Dorsolateral prefrontal cortex (tissue), 120 donors: ENCODE measurements at regions of chr12 and their contacts with region 1.

Region 1: DNA sequence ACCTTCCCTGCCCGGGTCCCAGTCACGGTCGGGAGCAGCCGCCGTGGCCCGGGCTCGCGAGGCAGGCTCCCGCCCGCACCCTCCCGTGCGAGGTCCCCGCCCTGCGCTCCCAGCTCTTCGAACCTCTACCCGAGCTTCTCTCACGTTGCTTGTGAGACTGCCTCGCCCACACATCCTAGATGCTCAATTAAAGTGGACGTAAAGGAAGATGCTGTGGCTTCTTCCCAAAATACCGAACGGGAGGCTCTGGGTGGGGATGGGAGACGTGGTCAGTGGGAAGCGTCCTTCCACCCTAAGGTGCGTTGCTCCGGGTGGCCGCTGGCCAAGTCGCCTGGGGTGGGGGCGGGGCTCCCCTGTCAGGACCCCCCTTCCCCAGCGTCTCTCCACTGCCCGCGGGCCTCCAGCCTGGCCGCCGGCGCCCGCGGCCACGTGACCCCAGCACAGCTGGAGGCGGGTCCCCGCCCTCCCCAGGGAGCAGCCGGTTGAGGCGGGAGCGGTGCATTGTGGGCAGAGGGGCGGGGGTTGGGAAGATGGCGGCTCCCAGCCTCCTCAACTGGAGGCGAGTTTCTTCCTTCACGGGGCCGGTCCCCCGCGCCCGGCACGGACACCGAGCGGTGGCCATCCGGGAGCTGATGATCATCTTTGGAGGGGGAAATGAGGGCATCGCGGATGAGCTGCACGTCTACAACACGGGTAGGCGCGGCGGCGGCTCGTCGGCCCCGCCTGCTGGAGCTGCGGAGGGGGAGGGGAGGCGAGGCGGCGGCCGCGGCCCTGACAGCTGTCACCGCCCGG is at the start of gene HCFC2:
- DNase-seq: peak; percentile 61 to 95 (median 90)
- H3K4me3 ChIP-seq: peak within 1 kb of the TSS; percentile 64 to 99 (median 90)
- H3K27ac ChIP-seq: peak within 1 kb of the TSS; percentile 41 to 95 (median 88)
- H3K27me3 ChIP-seq: no peaks in the 10 kb centered on the region
- CTCF ChIP-seq: peak in 23 of 56 donors; percentile 5 to 53 (median 26)
- total RNA-seq, gene HCFC2: 20.2 to 33.3 (median 27.6) TPM

Region 2: GRCh38 chr12:103392722-103393121 is 671.5 kb before region 1 on chr12:
- intact Hi-C with region 1: no loop called
- DNase-seq: no peak
- H3K4me3 ChIP-seq: no peak overlapping the region
- H3K27ac ChIP-seq: no peak overlapping the region
- H3K27me3 ChIP-seq: no peaks in the 10 kb centered on the region
- CTCF ChIP-seq: no peak

Region 3: DNA sequence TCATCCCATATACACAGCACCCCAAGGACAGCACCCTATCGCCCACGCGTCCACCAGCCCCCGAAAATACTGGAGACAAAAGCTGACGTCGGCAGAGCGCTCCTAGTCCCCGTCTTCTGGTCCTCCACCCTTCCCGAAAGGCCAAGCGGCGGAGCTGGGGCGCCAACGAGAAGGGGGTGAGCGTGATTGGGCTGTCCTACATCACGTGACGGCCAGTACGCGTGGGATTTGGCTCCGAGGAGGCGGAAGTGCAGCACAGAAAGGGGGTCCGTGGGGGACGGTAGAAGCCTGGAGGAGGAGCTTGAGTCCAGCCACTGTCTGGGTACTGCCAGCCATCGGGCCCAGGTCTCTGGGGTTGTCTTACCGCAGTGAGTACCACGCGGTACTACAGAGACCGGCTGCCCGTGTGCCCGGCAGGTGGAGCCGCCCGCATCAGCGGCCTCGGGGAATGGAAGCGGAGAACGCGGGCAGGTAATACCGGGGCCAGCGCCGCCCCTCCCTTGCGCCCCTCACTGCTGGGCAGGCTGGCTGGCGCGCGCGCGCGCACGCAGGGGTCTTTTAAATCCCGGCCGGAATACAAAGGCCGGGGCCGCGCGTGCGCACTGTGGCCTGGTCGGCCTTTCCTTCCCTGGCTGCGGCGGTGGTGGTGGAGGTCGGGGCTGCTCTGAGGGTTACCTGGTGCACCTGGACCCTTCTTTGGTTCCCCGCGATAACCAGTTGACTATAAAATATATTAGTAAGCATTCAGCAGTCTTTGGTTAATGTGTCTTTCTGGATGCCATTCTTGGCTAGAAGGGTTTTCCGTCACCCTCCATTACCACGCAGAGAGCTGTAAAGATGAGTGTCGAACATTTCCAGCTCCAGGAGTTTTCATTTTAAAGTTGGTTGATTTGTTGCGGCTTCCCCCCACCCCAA is 98.4 kb before region 1 on chr12 and contains the start of gene TDG:
- intact Hi-C with region 1: loop called (anchors 2 kb)
- DNase-seq: peak; percentile 96 to 99 (median 98)
- H3K4me3 ChIP-seq: peak within 1 kb of the TSS; percentile 55 to 99 (median 89)
- H3K27ac ChIP-seq: peak within 1 kb of the TSS; percentile 65 to 98 (median 94)
- H3K27me3 ChIP-seq: no peaks in the 10 kb centered on the region
- CTCF ChIP-seq: peak in 47 of 56 donors; percentile 0 to 58 (median 32)
- total RNA-seq, gene TDG: 9.9 to 22.2 (median 15.5) TPM

Region 4: DNA sequence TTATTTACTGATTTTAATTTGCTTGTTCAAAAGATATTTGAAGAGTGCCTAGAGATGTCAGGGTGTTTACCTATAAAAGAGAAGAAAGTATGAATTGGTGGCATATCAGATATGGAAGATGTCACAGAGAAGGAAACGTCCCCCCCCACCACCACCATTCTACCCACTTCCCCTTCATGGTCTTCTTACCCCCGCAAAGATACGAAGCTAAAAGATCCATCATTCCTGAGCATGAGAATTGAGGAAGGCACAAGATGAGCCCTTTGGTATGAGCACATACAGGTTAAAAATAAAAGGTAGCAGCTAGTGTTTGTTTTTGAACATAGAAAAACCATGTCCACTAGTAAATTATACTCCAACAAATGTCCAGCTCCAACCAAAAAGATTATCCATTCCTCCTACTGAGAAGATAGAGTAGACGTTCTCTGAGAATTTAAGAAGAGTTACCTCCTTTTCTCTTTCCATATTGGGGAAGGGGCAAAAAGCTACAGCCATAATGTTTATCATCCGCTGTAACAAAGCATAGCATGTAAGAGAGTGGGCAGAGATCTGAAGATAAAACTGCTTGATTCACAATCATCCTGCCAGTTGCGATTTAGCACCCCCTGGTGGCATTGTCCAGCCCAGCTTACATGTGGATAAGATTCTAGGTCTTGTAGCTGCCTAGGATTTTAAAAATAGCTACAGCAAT is 44.7 kb after region 1 on chr12:
- intact Hi-C with region 1: loop called in 1 of 2 experiments (anchors 5 kb)
- DNase-seq: peak; percentile 74 to 95 (median 83)
- H3K4me3 ChIP-seq: no peak overlapping the region
- H3K27ac ChIP-seq: peak overlapping the region in 4 of 59 donors; percentile 2 to 39 (median 8)
- H3K27me3 ChIP-seq: no peaks in the 10 kb centered on the region
- CTCF ChIP-seq: peak; percentile 70 to 93 (median 87)

Region 5: DNA sequence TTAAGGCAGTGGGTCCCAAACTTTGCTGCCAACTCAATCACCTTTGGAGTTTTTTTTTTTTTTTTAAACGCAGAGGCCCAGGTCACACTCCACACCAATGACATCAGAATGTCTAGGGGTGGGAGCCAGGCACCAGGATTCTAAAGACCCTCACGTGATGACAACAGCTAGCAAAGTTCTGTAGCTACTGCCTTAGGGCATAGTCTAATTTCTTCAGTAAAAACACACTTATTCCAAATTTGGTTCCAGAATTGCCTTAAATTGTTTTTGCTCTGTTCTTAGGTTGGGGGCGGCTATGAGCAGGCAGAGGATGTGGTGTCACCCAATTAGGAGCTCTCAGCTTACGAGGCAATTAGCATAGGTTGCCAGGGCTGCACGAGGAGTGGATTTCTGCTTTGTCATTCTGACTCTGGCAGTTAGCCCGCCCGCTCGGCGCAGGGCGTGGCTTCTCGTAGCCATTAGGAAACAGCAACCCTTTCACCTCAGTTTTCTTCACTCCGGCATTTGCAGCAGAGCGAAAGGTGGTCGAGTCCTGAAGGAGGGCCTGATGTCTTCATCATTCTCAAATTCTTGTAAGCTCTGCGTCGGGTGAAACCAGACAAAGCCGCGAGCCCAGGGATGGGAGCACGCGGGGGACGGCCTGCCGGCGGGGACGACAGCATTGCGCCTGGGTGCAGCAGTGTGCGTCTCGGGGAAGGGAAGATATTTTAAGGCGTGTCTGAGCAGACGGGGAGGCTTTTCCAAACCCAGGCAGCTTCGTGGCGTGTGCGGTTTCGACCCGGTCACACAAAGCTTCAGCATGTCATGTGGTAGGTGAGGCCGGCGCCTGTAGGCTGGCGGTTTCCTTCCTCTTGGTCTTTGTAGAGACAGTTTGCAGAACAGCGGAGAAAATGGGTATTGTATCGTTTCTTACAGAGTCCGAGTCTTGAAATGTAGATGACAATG is 222.6 kb after region 1 on chr12:
- intact Hi-C with region 1: loop called in 1 of 2 experiments (anchors 10 kb)
- DNase-seq: peak; percentile 76 to 90 (median 88)
- H3K4me3 ChIP-seq: peak overlapping the region; percentile 52 to 97 (median 81)
- H3K27ac ChIP-seq: peak overlapping the region; percentile 48 to 97 (median 91)
- H3K27me3 ChIP-seq: no peaks in the 10 kb centered on the region
- CTCF ChIP-seq: peak in 16 of 56 donors; percentile 4 to 39 (median 16)